Mammary epithelial cell (primary cell): ENCODE measurements at regions of chr18 and their contacts with region 1.

Region 1: GRCh38 chr18:35143622-35144596 is 96.9 kb upstream of the ZNF397 start:
- DNase-seq: peak; percentile 27
- H3K4me3 ChIP-seq: no peak overlapping the region
- H3K27ac ChIP-seq: no peak overlapping the region
- H3K4me1 ChIP-seq: no peaks in the 10 kb centered on the region
- H3K27me3 ChIP-seq: no peaks in the 10 kb centered on the region
- CTCF ChIP-seq: peak; percentile 64 to 86

Region 2: GRCh38 chr18:34592961-34593382 is 550.9 kb before region 1 on chr18:
- CTCF ChIA-PET with region 1: no interaction called
- dilution Hi-C with region 1: no loop called
- in situ Hi-C with region 1: no loop called
- intact Hi-C with region 1: loop called (anchors 10 kb)
- DNase-seq: peak; percentile 76
- H3K4me3 ChIP-seq: peak overlapping the region in 2 of 3 experiments; percentile 9 to 28
- H3K27ac ChIP-seq: no peak overlapping the region
- H3K4me1 ChIP-seq: no peaks in the 10 kb centered on the region
- H3K27me3 ChIP-seq: no peaks in the 10 kb centered on the region
- CTCF ChIP-seq: no peak

Region 3: DNA sequence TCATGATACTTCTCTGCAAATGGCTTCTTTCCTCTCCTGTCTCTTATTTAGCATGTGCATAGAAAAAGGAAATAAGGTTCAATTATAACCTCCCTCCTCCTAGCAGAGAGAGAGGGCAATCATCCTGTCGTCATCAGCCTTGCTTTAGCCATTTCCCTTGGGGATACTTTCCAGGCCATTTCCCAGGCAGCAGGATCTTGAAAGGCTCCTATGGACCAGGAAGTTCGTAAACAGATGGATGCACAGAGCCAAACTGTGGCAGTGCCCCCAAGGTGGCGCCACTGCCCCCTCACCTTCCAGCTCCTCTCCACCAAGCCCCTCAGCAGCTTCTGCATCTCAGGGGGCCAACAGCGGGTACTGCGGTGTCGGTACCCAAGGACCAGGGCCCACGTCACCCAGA is 276.4 kb before region 1 on chr18:
- CTCF ChIA-PET with region 1: no interaction called
- dilution Hi-C with region 1: no loop called
- in situ Hi-C with region 1: loop called in 1 of 2 experiments (anchors 25 kb)
- intact Hi-C with region 1: no loop called
- DNase-seq: no peak
- H3K4me3 ChIP-seq: no peak overlapping the region
- H3K27ac ChIP-seq: no peak overlapping the region
- H3K4me1 ChIP-seq: no peaks in the 10 kb centered on the region
- H3K27me3 ChIP-seq: no peaks in the 10 kb centered on the region
- CTCF ChIP-seq: peak; percentile 13 to 22

Region 4: GRCh38 chr18:34880882-34881834 is 262.8 kb before region 1 on chr18:
- CTCF ChIA-PET with region 1: no interaction called
- dilution Hi-C with region 1: no loop called
- in situ Hi-C with region 1: no loop called
- intact Hi-C with region 1: loop called (anchors 10 kb)
- DNase-seq: no peak
- H3K4me3 ChIP-seq: no peak overlapping the region
- H3K27ac ChIP-seq: no peak overlapping the region
- H3K4me1 ChIP-seq: no peaks in the 10 kb centered on the region
- H3K27me3 ChIP-seq: peaks cover 2% of the 10 kb centered on the region
- CTCF ChIP-seq: peak in 1 of 2 donors; percentile 30

Region 5: DNA sequence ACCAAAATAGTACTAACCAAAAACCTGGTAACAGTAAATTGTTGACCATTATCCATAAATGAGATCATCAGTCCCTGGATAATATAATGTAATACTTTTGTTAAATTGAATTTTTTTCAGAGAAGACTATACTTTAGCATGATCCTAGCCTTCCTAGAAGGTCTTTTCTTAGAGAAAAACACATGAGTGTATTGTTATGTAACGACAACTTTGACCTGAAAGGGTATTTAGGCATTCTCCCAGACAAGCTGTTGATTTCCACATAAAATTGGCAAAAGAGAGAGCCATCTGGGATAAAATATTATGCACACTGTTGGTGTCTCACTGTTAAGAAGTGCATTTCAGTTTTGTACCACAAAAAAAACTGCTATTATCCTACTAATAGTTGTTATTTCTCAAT is 222.7 kb before region 1 on chr18:
- CTCF ChIA-PET with region 1: no interaction called
- dilution Hi-C with region 1: no loop called
- in situ Hi-C with region 1: no loop called
- intact Hi-C with region 1: no loop called
- DNase-seq: no peak
- H3K4me3 ChIP-seq: no peak overlapping the region
- H3K27ac ChIP-seq: no peak overlapping the region
- H3K4me1 ChIP-seq: no peaks in the 10 kb centered on the region
- H3K27me3 ChIP-seq: peaks cover 4% of the 10 kb centered on the region
- CTCF ChIP-seq: no peak

Region 6: DNA sequence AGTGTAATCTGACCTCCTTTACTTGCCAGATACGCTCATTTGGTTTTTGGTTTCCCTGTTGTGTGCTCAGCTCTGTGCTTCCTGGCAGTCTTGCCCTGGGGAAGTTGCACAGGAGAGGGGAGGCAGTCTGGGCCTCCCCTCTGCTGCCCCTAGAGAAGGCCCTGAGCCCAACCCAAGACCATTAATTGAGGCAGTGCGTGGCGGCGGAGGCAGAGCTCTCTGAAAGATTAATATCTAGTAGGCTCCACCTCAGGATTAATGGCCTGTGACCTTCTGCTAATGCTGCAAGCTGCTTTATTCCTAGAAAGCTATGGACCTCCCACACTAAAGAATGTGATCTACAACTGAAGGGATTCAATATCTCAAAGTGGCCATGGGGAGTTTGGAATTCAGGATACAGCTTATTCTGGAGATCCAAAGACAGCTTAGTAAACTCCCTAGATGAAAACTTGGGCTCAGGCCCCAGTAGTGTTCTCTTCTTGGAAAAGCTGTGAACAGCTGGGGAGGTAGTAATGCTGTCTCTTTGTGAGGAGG is 144.1 kb before region 1 on chr18:
- CTCF ChIA-PET with region 1: no interaction called
- dilution Hi-C with region 1: no loop called
- in situ Hi-C with region 1: loop called (anchors 5 to 25 kb)
- intact Hi-C with region 1: no loop called
- DNase-seq: no peak
- H3K4me3 ChIP-seq: no peak overlapping the region
- H3K27ac ChIP-seq: no peak overlapping the region
- H3K4me1 ChIP-seq: no peaks in the 10 kb centered on the region
- H3K27me3 ChIP-seq: peaks cover 2% of the 10 kb centered on the region
- CTCF ChIP-seq: no peak

Region 7: DNA sequence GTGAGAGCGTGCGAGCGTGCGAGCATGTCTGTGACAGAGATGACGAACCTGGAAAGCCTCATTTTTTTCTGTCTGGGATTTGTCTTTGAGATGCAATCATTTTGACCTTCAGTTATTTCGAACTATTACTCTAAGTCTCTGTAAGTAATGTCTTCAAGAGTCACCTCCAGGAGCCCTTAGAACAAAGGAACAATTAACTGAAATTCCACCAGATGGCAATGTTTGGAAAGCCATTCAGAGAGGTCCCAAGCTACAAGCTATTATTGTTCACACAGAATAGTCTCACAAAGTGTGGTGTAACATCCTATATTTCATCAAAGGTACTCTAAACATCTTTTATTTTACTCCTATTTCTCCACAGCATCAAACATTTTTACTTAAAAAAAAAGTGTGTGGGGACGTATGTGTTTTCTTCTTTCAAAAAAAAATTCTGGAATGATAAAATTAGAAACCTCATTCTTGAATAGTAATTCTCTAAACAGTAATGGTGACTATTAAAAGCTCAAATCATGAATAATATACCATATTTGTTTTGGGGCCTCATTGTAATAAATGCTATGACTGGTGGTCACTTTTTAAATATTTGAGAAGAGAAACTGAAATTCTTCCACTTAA is 137.8 kb before region 1 on chr18:
- CTCF ChIA-PET with region 1: interaction called, 8 read pairs
- dilution Hi-C with region 1: no loop called
- in situ Hi-C with region 1: loop called (anchors 5 to 25 kb)
- intact Hi-C with region 1: loop called (anchors 1 kb)
- DNase-seq: peak; percentile 52
- H3K4me3 ChIP-seq: no peak overlapping the region
- H3K27ac ChIP-seq: no peak overlapping the region
- H3K4me1 ChIP-seq: no peaks in the 10 kb centered on the region
- H3K27me3 ChIP-seq: peaks cover 2% of the 10 kb centered on the region
- CTCF ChIP-seq: peak; percentile 51 to 64

Region 8: DNA sequence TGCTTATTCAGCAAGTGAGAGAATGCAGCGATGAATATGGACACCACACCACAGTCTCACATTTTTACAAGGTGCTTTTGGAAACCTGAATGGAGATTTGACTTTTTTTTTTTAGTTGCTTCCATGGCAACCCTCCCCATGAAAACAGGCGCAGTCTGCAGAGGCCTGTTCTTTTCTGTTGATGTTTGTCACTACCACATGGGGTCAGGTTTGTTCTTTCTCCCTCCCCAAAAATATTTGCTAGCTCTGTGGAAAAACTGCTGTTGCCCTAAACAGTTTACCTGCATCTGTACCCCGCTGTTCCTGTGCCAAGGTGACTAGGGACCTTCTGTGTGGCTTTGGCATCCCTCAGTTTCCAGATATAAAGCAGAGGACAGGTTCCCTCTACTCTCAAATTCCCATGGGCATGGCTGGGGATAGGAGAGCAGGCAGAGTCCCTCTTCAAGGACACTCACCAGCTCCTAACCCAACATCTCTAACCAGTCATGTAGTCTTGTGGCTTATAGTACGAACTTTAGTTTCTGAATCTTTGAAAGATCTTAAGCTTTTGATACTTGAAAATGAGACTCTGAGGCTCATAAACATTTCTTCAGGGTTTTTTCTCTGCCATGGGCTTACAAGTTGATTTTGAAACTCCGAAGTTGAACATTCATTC is 117.4 kb before region 1 on chr18:
- CTCF ChIA-PET with region 1: no interaction called
- dilution Hi-C with region 1: no loop called
- in situ Hi-C with region 1: loop called in 1 of 2 experiments (anchors 25 kb)
- intact Hi-C with region 1: loop called (anchors 1 kb)
- DNase-seq: no peak
- H3K4me3 ChIP-seq: no peak overlapping the region
- H3K27ac ChIP-seq: no peak overlapping the region
- H3K4me1 ChIP-seq: peaks cover 3% of the 10 kb centered on the region
- H3K27me3 ChIP-seq: no peaks in the 10 kb centered on the region
- CTCF ChIP-seq: no peak

Region 9: GRCh38 chr18:35110554-35111485 is 33.1 kb before region 1 on chr18:
- CTCF ChIA-PET with region 1: no interaction called
- dilution Hi-C with region 1: no loop called
- in situ Hi-C with region 1: no loop called
- intact Hi-C with region 1: no loop called
- DNase-seq: no peak
- H3K4me3 ChIP-seq: no peak overlapping the region
- H3K27ac ChIP-seq: no peak overlapping the region
- H3K4me1 ChIP-seq: no peaks in the 10 kb centered on the region
- H3K27me3 ChIP-seq: no peaks in the 10 kb centered on the region
- CTCF ChIP-seq: no peak